ENCODE measurements at regions of chr2 and their contacts with region 1.

Region 1: DNA sequence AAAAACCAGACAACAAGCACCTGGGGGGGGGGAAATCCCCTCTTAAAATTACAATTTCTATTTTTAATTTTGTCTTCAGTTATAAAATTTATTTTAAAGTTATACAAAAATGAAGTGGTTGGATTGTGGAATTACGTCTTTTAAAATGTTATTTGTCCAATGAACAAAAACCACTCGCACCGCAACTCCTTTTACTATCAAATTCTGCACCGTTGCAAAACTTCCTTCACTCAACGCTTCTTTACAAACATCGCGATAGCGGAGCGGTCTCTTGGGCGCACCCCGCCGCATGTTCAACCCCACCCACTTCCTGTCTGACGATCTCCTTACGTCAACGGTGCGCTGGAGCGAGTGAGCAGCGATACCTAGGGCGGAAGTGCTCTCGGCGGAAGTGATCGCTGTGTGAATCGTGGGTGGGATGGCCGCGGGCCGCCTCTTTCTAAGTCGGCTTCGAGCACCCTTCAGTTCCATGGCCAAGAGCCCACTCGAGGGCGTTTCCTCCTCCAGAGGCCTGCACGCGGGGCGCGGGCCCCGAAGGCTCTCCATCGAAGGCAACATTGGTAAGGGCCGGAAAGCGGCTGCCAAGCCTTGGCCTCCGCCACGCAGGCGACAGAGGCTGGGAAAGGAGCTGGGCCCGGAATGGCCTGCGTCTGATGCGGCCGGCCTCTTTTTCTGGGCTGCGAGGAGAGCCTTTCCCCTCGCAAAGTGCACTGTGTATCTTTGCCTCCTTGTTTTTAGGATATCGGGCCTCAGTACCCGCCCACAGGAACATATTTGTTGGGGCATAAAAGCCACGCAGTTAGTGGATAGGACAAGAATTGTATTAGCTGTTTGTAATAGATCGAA is at the start of gene DGUOK:
- DNase-seq: peak; percentile 99
- ATAC-seq: peak; percentile 100
- total RNA-seq, gene DGUOK: 25.2 to 33.7 TPM

Region 2: DNA sequence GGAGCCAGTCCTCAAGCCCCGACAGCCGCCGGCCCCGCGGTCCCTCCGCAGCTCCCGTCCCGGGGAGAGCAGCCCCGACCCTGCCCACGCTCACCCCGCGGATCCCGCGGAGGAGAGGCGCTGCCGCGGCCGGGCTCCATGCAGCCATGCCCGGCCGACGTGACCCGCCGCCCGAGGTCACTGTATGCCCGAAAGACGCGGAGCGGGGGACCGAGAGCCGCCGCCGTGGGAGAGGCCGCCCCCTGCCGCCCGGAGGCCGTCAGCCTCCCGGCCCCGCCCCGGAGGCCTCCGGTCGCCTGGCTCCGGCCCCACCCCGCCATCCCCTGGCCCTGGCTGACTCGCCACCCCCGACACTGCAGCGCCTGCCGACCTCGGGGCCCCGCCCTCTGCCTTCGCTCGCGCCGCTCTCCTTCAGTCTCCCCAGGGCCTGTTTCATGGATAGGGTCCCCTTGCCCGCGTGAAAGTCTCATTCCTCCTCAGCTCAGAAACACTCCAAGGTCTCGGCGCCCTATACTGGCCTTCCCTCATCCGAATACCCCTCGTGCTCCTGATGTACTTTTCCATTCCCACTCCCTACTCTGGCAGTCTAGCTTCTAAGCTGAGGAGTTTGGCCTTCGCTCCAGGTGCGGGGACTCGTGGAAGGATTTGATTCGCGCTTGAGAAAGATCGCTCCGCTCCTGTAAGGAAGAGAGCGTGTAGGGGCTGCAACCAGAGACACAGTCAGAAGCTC is 221.2 kb after region 1 on chr2 and contains the start of gene BOLA3:
- intact Hi-C with region 1: loop called in 1 of 2 experiments (anchors 5 kb)
- DNase-seq: peak; percentile 90
- ATAC-seq: peak; percentile 98
- total RNA-seq, gene BOLA3: 91.6 to 102 TPM